Transverse colon (tissue), 4 donors: ENCODE measurements at regions of chr4 and their contacts with region 1.

Region 1: GRCh38 chr4:83658806-83659495 is 123.0 kb downstream of the GPAT3 start:
- DNase-seq: no peak
- H3K4me3 ChIP-seq: no peak overlapping the region
- H3K27ac ChIP-seq: no peak overlapping the region
- H3K4me1 ChIP-seq: no peaks in the 10 kb centered on the region
- H3K27me3 ChIP-seq: no peaks in the 10 kb centered on the region
- CTCF ChIP-seq: no peak
- EP300 ChIP-seq: no peak
- POLR2A ChIP-seq: no peak

Region 2: GRCh38 chr4:84511703-84512102 is 852.8 kb after region 1 on chr4:
- in situ Hi-C with region 1: loop called in 3 of 4 experiments (anchors 10 to 25 kb)
- intact Hi-C with region 1: no loop called
- DNase-seq: no peak
- H3K4me3 ChIP-seq: no peak overlapping the region
- H3K27ac ChIP-seq: no peak overlapping the region
- H3K4me1 ChIP-seq: no peaks in the 10 kb centered on the region
- H3K27me3 ChIP-seq: peaks cover 46% of the 10 kb centered on the region
- CTCF ChIP-seq: no peak
- EP300 ChIP-seq: no peak
- POLR2A ChIP-seq: no peak